ENCODE measurements at regions of chr9 and their contacts with region 1.

Region 1: DNA sequence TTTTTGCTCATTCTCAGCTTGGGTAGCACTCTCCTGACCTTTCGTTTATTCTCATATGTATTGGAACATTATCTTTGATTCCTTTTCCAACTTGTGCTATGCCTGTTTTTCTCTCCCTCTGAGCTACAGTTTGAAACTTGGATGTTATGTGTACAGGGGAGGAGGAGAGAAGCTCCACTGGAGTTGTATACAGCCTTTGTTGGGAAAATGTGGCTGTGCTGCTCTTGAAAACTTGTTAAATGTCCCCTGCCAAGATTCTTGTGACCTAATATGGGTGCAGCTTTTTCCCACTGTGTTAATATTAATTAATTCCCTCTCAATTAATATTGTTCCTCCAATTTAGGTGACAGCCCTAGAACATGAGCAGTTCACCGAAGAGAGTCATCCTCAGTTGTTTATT is 235.4 kb downstream of the AOPEP start:
- DNase-seq: no peak
- H3K4me3 ChIP-seq: no peak overlapping the region
- H3K27ac ChIP-seq: no peak overlapping the region
- H3K4me1 ChIP-seq: no peaks in the 10 kb centered on the region
- H3K27me3 ChIP-seq: no peaks in the 10 kb centered on the region
- CTCF ChIP-seq: no peak
- POLR2A ChIP-seq: no peak

Region 2: GRCh38 chr9:94985649-94986048 is 23.8 kb after region 1 on chr9:
- intact Hi-C with region 1: loop called (anchors 1 kb)
- DNase-seq: no peak
- H3K4me3 ChIP-seq: no peak overlapping the region
- H3K27ac ChIP-seq: no peak overlapping the region
- H3K4me1 ChIP-seq: no peaks in the 10 kb centered on the region
- H3K27me3 ChIP-seq: no peaks in the 10 kb centered on the region
- CTCF ChIP-seq: no peak
- POLR2A ChIP-seq: no peak

Region 3: GRCh38 chr9:95004411-95005277 is 42.8 kb after region 1 on chr9:
- intact Hi-C with region 1: no loop called
- DNase-seq: no peak
- H3K4me3 ChIP-seq: peak overlapping the region; percentile 70 to 89 (median 72)
- H3K27ac ChIP-seq: peak overlapping the region; percentile 93 to 95
- H3K4me1 ChIP-seq: no peaks in the 10 kb centered on the region
- H3K27me3 ChIP-seq: no peaks in the 10 kb centered on the region
- CTCF ChIP-seq: no peak
- POLR2A ChIP-seq: no peak

Region 4: DNA sequence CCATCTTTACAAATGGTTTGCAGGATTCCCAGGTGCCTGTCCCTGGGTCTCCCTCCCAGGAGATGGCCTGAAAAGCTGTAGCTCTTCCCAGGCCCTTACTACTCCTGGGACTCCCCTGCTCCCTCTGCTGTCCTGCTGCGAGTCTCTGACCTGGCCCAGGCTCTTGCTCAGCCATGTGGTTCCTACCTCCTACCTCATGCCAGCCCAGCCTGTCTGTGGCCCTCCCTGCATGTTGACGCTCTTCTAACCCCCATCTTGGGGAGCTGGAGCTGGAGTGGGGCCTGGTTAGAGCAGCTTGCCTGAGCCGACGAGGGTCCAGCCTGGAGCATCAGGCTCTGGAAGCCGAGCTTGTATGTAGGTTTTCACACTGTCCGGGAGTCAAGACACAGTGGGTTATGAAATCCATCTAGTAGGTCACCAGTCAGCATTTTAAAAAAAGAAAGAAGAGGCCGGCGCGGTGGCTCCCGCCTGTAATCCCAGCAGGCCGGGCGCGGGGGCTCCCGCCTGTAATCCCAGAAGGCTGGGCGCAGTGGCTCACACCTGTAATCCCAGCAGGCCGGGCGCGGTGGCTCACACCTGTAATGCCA is 111.2 kb after region 1 on chr9:
- intact Hi-C with region 1: no loop called
- DNase-seq: peak in 1 of 2 donors; percentile 8
- H3K4me3 ChIP-seq: no peak overlapping the region
- H3K27ac ChIP-seq: no peak overlapping the region
- H3K4me1 ChIP-seq: no peaks in the 10 kb centered on the region
- H3K27me3 ChIP-seq: no peaks in the 10 kb centered on the region
- CTCF ChIP-seq: no peak
- POLR2A ChIP-seq: no peak